ENCODE measurements at regions of chr2 and their contacts with region 1.

Region 1: GRCh38 chr2:207847807-207848544 is 78.3 kb upstream of the FZD5 start:
- DNase-seq: peak; percentile 70 to 96
- H3K4me3 ChIP-seq: no peak overlapping the region
- H3K27ac ChIP-seq: peak overlapping the region; percentile 46
- H3K4me1 ChIP-seq: peaks cover 26% of the 10 kb centered on the region
- H3K27me3 ChIP-seq: no peaks in the 10 kb centered on the region
- CTCF ChIP-seq: no peak

Region 2: GRCh38 chr2:207792244-207792785 is 55.7 kb before region 1 on chr2:
- CTCF ChIA-PET with region 1: no interaction called
- POLR2A ChIA-PET with region 1: no interaction called
- intact Hi-C with region 1: loop called (anchors 5 kb)
- DNase-seq: peak; percentile 49 to 75
- H3K4me3 ChIP-seq: no peak overlapping the region
- H3K27ac ChIP-seq: peak overlapping the region; percentile 69
- H3K4me1 ChIP-seq: peaks cover 20% of the 10 kb centered on the region
- H3K27me3 ChIP-seq: no peaks in the 10 kb centered on the region
- CTCF ChIP-seq: no peak

Region 3: GRCh38 chr2:207833251-207833751 is 14.7 kb before region 1 on chr2:
- CTCF ChIA-PET with region 1: no interaction called
- POLR2A ChIA-PET with region 1: interaction called, 9 read pairs
- intact Hi-C with region 1: loop called (anchors 2 kb)
- DNase-seq: no peak
- H3K4me3 ChIP-seq: no peak overlapping the region
- H3K27ac ChIP-seq: no peak overlapping the region
- H3K4me1 ChIP-seq: peaks cover 16% of the 10 kb centered on the region
- H3K27me3 ChIP-seq: no peaks in the 10 kb centered on the region
- CTCF ChIP-seq: no peak

Region 4: DNA sequence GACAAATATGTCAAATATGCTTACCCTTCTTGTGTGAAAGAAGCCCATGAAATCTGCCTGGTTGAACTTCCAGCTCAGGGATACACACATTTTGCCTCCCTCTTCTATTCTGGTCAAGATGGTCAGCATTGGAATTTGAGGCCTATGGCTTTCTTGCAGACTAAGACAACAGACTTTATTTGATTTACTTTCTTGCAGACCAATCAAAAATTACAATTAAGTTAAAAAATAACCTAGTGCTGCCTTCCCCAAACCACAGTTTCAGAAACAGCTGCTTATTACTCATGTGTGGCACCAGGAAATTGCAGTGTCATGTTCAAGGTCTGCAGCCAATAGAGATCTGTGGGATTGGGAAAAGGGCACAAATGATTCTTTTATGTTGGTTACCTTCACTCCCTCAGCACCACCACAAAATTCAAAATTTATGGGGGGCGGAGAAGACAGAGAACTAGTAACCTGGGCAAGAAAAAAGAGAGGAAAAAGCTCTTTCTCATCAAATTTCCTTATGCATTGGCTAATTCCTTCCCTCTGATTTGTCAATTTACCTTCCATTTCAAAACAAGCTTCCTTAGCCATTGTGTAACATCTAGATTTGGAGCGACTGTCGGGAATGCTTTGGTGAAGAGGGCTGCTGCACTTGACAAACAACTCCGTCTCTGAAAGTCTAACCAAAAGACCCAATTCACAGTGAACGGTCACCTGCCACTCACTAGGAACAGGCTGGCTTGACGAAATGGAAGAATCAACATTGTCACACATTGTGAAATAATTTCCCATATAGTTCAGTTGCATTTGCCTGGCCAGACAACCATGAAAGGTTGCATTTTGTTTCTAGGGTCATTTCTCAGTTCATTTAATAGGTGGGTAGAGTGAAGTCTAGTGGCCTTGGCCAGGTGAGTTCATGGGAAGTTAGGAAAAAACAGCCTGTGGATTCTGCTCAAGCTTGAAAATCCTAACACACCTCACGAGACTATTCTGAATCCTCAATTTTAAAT is 22.1 kb after region 1 on chr2:
- CTCF ChIA-PET with region 1: interaction called, 19 read pairs
- POLR2A ChIA-PET with region 1: interaction called, 6 read pairs
- intact Hi-C with region 1: no loop called
- DNase-seq: peak in 1 of 2 experiments; percentile 52
- H3K4me3 ChIP-seq: no peak overlapping the region
- H3K27ac ChIP-seq: peak overlapping the region; percentile 57
- H3K4me1 ChIP-seq: peaks cover 24% of the 10 kb centered on the region
- H3K27me3 ChIP-seq: no peaks in the 10 kb centered on the region
- CTCF ChIP-seq: no peak

Region 5: DNA sequence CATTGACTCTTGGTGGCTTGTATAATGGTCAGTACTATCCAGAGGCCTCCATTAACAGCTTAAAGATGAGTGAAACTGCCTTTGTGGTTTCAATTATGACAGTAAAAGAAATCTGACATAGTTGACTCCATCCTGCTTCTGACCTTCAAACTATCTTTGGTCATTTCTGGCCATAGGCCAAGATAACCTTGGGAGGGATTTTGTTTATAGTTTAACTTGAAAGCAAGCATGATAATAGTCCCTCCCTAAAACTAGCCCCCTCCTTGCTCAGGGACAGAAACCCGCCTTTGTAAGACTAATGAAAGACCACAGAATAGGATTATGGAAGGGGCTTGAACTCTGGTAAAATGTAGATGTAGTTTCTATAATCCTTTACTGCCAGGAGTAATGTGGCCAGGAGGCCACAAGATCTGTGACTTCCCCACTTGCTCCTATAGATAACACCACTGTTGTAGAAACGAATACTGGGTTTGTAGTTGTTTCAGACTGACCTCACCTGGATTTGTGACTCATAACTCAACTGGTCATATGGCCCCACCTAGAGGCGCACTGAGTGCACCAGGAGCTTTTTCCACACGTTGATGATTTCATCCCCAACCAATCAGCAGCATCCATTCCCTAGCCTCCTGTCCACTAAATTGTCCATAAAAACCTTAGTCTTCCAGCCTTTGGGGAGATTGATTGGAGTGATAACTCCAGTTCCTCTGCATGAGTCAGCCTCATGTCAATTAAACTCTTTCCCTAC is 186.0 kb after region 1 on chr2:
- CTCF ChIA-PET with region 1: no interaction called
- POLR2A ChIA-PET with region 1: no interaction called
- intact Hi-C with region 1: loop called (anchors 5 kb)
- DNase-seq: peak; percentile 48 to 91
- H3K4me3 ChIP-seq: no peak overlapping the region
- H3K27ac ChIP-seq: peak overlapping the region; percentile 61
- H3K4me1 ChIP-seq: peaks cover 55% of the 10 kb centered on the region
- H3K27me3 ChIP-seq: no peaks in the 10 kb centered on the region
- CTCF ChIP-seq: peak; percentile 55

Measured in PC-9 (cell line).